ENCODE measurements at regions of chr10 and their contacts with region 1.

Region 1: DNA sequence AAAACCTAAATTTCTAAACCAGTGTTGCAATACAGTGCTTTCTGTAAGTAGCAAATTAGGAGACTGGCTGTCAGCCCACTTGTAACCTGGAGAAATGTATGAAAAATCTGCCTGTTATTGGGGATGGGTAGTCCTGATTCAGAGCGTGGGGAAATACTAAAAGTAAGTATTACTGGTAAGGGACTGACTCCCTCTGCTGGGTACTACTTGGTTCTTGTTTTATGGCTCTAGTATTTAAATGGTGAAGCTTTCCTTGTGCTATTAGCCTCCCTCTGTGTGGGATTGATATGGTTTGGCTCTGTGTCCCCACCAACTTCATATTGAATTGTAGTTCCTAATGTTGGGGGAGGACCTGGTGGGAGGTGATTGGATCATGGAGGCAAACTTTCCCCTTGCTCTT is 886.1 kb downstream of the SORCS1 start:
- DNase-seq: no peak
- ATAC-seq: peak in 3 of 8 donors; percentile 38 to 41 (median 39)
- H3K4me3 ChIP-seq: no peak overlapping the region
- H3K27ac ChIP-seq: no peak overlapping the region
- H3K4me1 ChIP-seq: no peaks in the 10 kb centered on the region
- H3K27me3 ChIP-seq: peaks cover 0 to 7% (median 0%) of the 10 kb centered on the region in 7 donors
- CTCF ChIP-seq: peak in 3 of 9 donors; percentile 23 to 44 (median 39)

Region 2: GRCh38 chr10:105956550-105956949 is 321.8 kb before region 1 on chr10:
- intact Hi-C with region 1: loop called in 2 of 10 experiments (anchors 5 kb)
- DNase-seq: no peak
- ATAC-seq: no peak
- H3K4me3 ChIP-seq: no peak overlapping the region
- H3K27ac ChIP-seq: no peak overlapping the region
- H3K4me1 ChIP-seq: peaks cover 0 to 4% (median 0%) of the 10 kb centered on the region in 9 donors
- H3K27me3 ChIP-seq: no peaks in the 10 kb centered on the region
- CTCF ChIP-seq: no peak

Region 3: GRCh38 chr10:106387063-106387462 is 108.7 kb after region 1 on chr10:
- intact Hi-C with region 1: no loop called
- DNase-seq: no peak
- ATAC-seq: no peak
- H3K4me3 ChIP-seq: no peak overlapping the region
- H3K27ac ChIP-seq: no peak overlapping the region
- H3K4me1 ChIP-seq: no peaks in the 10 kb centered on the region
- H3K27me3 ChIP-seq: peaks cover 0 to 4% (median 0%) of the 10 kb centered on the region in 7 donors
- CTCF ChIP-seq: no peak

Measured in heart right ventricle (tissue), 16 donors.